Right ventricle myocardium superior (tissue), 1 donor: ENCODE measurements at regions of chr13 and their contacts with region 1.

Region 1: GRCh38 chr13:21476893-21477472 is 17.9 kb upstream of the ZDHHC20 start:
- DNase-seq: peak; percentile 88
- ATAC-seq: peak; percentile 89

Region 2: DNA sequence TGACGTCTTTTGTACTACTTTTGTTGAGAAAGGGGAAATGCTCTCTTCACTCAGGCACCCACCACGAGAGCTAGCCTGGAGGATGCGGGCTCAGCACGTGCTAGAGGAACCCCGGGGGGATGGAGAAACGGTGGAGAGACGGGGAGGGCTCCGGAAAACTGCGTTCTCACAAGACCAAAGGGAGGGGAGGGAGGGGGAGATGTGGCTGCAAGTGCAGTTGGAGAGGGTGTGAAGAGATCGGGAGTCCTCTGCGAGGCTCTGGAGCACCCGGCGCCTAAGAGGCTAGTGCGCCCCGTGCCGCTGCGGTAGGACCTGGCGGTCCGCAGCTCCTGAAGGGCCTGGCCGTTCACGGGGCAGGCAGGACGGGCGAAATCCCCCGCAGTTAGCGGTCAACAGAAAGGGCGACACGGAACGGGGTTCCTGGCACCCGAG is 531.0 kb before region 1 on chr13:
- intact Hi-C with region 1: loop called (anchors 10 kb)
- DNase-seq: peak; percentile 48
- ATAC-seq: no peak

Region 3: GRCh38 chr13:20974981-20975540 is 501.9 kb before region 1 on chr13:
- intact Hi-C with region 1: no loop called
- DNase-seq: no peak
- ATAC-seq: no peak

Region 4: GRCh38 chr13:21115231-21115630 is 361.8 kb before region 1 on chr13:
- intact Hi-C with region 1: loop called (anchors 10 kb)
- DNase-seq: no peak
- ATAC-seq: no peak

Region 5: GRCh38 chr13:21297914-21298831 is 178.8 kb before region 1 on chr13:
- intact Hi-C with region 1: loop called (anchors 5 kb)
- DNase-seq: peak; percentile 89
- ATAC-seq: peak; percentile 100